ENCODE measurements at regions of chr7 and their contacts with region 1.

Region 1: GRCh38 chr7:41134300-41135250 is 568.3 kb downstream of the INHBA start:
- DNase-seq: no peak
- H3K4me3 Mint-ChIP-seq: no peak overlapping the region
- H3K27ac Mint-ChIP-seq: peak overlapping the region; percentile 57
- H3K4me1 Mint-ChIP-seq: no peaks in the 10 kb centered on the region
- H3K27me3 Mint-ChIP-seq: no peaks in the 10 kb centered on the region

Region 2: GRCh38 chr7:41189866-41190265 is 55.3 kb after region 1 on chr7:
- intact Hi-C with region 1: loop called (anchors 10 kb)
- DNase-seq: no peak
- H3K4me3 Mint-ChIP-seq: no peak overlapping the region
- H3K27ac Mint-ChIP-seq: no peak overlapping the region
- H3K4me1 Mint-ChIP-seq: no peaks in the 10 kb centered on the region
- H3K27me3 Mint-ChIP-seq: no peaks in the 10 kb centered on the region